Colonic mucosa (tissue), 4 donors: ENCODE measurements at regions of chr5 and their contacts with region 1.

Region 1: GRCh38 chr5:91225848-91226686 is 157.1 kb downstream of the ARRDC3 start:
- DNase-seq: peak; percentile 58
- H3K4me3 ChIP-seq: no peak overlapping the region
- H3K27ac ChIP-seq: no peak overlapping the region
- H3K4me1 ChIP-seq: no peaks in the 10 kb centered on the region
- H3K27me3 ChIP-seq: no peaks in the 10 kb centered on the region
- CTCF ChIP-seq: peak; percentile 28

Region 2: GRCh38 chr5:90878549-90879196 is 347.4 kb before region 1 on chr5:
- intact Hi-C with region 1: loop called (anchors 10 kb)
- DNase-seq: no peak
- H3K4me3 ChIP-seq: no peak overlapping the region
- H3K27ac ChIP-seq: no peak overlapping the region
- H3K4me1 ChIP-seq: no peaks in the 10 kb centered on the region
- H3K27me3 ChIP-seq: no peaks in the 10 kb centered on the region
- CTCF ChIP-seq: no peak

Region 3: GRCh38 chr5:91101600-91102379 is 124.3 kb before region 1 on chr5:
- intact Hi-C with region 1: loop called (anchors 5 kb)
- DNase-seq: peak; percentile 80
- H3K4me3 ChIP-seq: no peak overlapping the region
- H3K27ac ChIP-seq: no peak overlapping the region
- H3K4me1 ChIP-seq: peaks cover 3% of the 10 kb centered on the region
- H3K27me3 ChIP-seq: no peaks in the 10 kb centered on the region
- CTCF ChIP-seq: peak; percentile 60

Region 4: GRCh38 chr5:91272858-91273257 is 46.8 kb after region 1 on chr5:
- intact Hi-C with region 1: loop called (anchors 10 kb)
- DNase-seq: no peak
- H3K4me3 ChIP-seq: no peak overlapping the region
- H3K27ac ChIP-seq: no peak overlapping the region
- H3K4me1 ChIP-seq: no peaks in the 10 kb centered on the region
- H3K27me3 ChIP-seq: no peaks in the 10 kb centered on the region
- CTCF ChIP-seq: no peak